PC-3 (cell line): ENCODE measurements at regions of chr6 and their contacts with region 1.

Region 1: DNA sequence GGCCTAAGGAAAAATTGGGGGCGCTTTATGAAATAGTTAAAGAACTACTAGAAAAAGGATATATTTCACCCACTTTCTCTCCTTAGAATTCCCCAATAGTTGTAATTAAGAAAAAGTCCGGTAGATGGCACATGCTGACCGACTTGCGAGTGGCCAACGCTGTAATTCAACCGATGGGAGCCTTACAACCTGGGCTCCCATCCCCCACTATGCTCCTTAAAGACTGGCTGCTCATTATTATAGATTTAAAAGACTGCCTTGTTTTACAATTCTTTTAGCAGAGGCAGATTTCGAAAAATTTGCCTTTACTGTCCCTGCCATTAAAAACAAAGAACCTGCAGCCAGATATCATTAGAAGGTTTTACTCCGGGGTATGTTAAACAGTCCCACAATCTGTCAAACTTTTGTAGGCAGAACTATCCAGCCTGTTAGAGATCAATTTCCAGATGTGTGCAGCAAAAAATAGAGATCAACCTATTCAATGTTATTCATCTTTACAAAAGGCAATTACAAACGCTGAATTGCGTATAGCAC is 58.5 kb upstream of the PRSS16 start:
- DNase-seq: peak; percentile 91
- ATAC-seq: peak; percentile 80
- H3K4me3 ChIP-seq: peak overlapping the region; percentile 81
- H3K27ac ChIP-seq: peak overlapping the region; percentile 41
- H3K4me1 ChIP-seq: no peaks in the 10 kb centered on the region
- H3K27me3 ChIP-seq: no peaks in the 10 kb centered on the region
- CTCF ChIP-seq: peak; percentile 81

Region 2: DNA sequence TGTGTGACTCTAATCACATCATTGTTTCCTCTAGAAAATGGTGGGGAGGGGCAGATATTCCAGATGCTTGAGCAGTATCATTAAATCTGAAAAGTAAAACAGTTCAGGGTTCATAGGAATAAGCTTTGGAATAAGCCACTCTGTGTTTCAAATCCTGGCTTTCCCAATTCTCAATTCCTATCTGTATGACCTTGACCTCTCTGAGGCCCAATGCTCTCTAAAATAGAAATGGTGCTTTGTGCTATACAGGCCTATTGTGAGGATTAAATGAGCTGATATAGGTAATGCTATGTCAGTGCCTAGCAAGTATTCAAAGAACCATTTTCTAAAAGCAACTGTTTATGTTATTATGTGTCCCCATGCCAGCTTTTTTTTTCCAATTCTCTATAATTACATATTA is 150.5 kb before region 1 on chr6:
- CTCF ChIA-PET with region 1: no interaction called
- POLR2A ChIA-PET with region 1: no interaction called
- intact Hi-C with region 1: no loop called
- DNase-seq: no peak
- ATAC-seq: no peak
- H3K4me3 ChIP-seq: no peak overlapping the region
- H3K27ac ChIP-seq: no peak overlapping the region
- H3K4me1 ChIP-seq: no peaks in the 10 kb centered on the region
- H3K27me3 ChIP-seq: no peaks in the 10 kb centered on the region; the same call in 1 of the 2 replicates
- CTCF ChIP-seq: no peak

Region 3: DNA sequence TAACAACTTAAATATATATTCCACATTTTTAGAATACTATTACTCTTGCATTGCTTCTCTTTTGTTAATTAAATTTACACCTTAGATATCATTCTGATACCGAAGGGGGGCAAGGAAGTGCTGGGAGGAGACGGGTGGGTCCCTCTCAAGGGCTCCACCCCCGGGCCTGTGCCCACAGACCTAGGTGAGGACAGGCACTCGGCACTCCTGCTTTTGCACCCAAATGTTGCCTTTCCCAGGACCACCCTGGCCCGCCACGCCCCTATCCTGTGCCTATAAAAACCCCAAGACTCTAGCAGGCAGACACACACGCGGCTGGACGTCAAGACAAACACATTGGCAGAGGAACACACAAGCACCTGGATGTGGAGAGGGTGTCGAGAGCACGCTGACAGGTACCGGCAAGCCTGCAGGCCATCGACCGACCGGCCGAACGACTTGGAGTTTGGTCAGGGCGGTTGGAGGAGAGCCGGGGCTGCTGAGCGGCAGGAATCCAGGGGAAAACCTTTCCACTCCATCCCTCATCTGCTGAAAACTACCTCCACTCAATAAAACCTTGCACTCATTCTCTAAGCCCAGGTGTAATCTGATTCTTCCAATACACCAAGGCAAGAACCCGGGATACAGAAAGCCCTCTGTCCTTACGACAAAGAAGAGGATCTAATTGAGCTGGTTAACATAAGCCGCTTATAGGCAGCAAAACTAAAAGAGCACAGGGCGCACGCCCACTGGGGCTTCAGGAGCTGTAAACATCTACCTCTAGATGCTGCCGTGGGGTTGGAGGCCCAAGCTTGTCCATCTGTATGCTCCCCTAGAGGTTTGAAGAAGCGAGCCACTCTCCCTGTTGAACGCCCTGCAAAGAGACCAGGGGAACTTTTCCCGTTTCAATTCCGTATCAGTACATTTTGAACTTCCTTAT is 138.8 kb before region 1 on chr6:
- CTCF ChIA-PET with region 1: no interaction called
- POLR2A ChIA-PET with region 1: no interaction called
- intact Hi-C with region 1: no loop called
- DNase-seq: no peak
- ATAC-seq: no peak
- H3K4me3 ChIP-seq: no peak overlapping the region
- H3K27ac ChIP-seq: no peak overlapping the region
- H3K4me1 ChIP-seq: no peaks in the 10 kb centered on the region
- H3K27me3 ChIP-seq: no peaks in the 10 kb centered on the region
- CTCF ChIP-seq: no peak

Region 4: GRCh38 chr6:27177485-27178406 is 11.2 kb before region 1 on chr6:
- CTCF ChIA-PET with region 1: no interaction called
- POLR2A ChIA-PET with region 1: no interaction called
- intact Hi-C with region 1: loop called (anchors 1 kb)
- DNase-seq: peak; percentile 88
- ATAC-seq: peak; percentile 81
- H3K4me3 ChIP-seq: peak overlapping the region; percentile 99
- H3K27ac ChIP-seq: peak overlapping the region; percentile 52
- H3K4me1 ChIP-seq: no peaks in the 10 kb centered on the region
- H3K27me3 ChIP-seq: no peaks in the 10 kb centered on the region
- CTCF ChIP-seq: peak; percentile 62

Region 5: GRCh38 chr6:27388293-27389197 is 199.6 kb after region 1 on chr6 and contains the start of gene ZNF391:
- CTCF ChIA-PET with region 1: no interaction called
- POLR2A ChIA-PET with region 1: no interaction called
- intact Hi-C with region 1: loop called (anchors 5 kb)
- DNase-seq: peak; percentile 79
- ATAC-seq: peak; percentile 94
- H3K4me3 ChIP-seq: peak within 1 kb of the TSS; percentile 86
- H3K27ac ChIP-seq: peak within 1 kb of the TSS; percentile 62
- H3K4me1 ChIP-seq: peaks cover 9% of the 10 kb centered on the region
- H3K27me3 ChIP-seq: no peaks in the 10 kb centered on the region
- CTCF ChIP-seq: no peak
- total RNA-seq, gene ZNF391: 1.7 and 5.9 TPM in 2 replicates

Region 6: GRCh38 chr6:27503436-27504030 is 314.6 kb after region 1 on chr6:
- CTCF ChIA-PET with region 1: no interaction called
- POLR2A ChIA-PET with region 1: no interaction called
- intact Hi-C with region 1: loop called (anchors 1 kb)
- DNase-seq: peak; percentile 91
- ATAC-seq: peak; percentile 25
- H3K4me3 ChIP-seq: peak overlapping the region; percentile 86
- H3K27ac ChIP-seq: peak overlapping the region; percentile 11; the same call in 1 of the 2 replicates
- H3K4me1 ChIP-seq: peaks cover 8% of the 10 kb centered on the region; the same call in 1 of the 2 replicates
- H3K27me3 ChIP-seq: no peaks in the 10 kb centered on the region
- CTCF ChIP-seq: no peak

Region 7: DNA sequence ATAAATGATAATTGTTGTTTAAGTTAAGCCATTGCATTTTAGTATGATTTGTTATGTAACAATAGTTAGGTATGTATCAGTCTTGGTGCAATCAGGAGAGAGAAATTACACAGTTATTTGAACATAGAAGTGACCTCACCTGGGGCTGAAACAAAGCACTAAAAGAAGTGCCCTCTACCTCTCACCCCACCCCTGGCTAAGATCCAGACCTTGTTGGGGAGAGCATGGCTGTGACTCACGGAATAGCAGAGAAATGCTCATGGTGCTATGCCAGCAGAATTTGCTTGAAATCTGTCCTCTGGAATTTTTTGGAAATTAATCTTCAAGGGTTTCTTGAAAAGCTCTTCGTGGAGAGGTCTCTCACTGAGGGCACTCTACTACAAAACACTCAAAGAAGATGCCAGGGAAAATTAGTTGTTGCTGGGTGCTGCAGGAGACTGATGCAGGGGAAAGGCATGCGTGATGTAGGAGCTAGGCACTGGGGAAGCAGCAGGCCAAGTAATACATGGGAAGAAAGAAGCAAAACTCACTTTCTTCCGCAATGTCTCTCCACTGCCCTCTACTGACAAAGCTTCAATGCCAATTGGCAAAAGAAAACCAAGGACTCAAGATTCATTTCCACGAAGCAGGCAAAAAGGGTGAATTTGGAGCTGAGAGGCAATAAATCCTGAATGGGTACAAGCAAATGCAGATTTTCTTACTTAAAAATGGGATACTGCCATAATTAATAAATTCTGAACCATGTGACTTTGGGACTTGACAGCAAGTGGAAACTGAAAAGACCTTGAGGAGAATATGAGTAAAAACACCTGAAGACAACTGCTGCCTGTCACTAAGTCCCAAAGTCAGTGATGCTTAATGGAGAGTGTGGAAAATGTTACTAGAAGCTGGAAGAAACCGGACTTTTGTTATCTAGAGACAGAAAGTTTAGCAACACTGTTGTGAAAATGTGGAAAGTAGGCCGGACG is 420.2 kb after region 1 on chr6:
- CTCF ChIA-PET with region 1: no interaction called
- POLR2A ChIA-PET with region 1: no interaction called
- intact Hi-C with region 1: loop called (anchors 1 kb)
- DNase-seq: peak; percentile 86
- ATAC-seq: peak; percentile 89
- H3K4me3 ChIP-seq: peak overlapping the region; percentile 39; the same call in 1 of the 2 replicates
- H3K27ac ChIP-seq: peak overlapping the region; percentile 49
- H3K4me1 ChIP-seq: peaks cover 7% of the 10 kb centered on the region
- H3K27me3 ChIP-seq: no peaks in the 10 kb centered on the region
- CTCF ChIP-seq: peak; percentile 90

Region 8: DNA sequence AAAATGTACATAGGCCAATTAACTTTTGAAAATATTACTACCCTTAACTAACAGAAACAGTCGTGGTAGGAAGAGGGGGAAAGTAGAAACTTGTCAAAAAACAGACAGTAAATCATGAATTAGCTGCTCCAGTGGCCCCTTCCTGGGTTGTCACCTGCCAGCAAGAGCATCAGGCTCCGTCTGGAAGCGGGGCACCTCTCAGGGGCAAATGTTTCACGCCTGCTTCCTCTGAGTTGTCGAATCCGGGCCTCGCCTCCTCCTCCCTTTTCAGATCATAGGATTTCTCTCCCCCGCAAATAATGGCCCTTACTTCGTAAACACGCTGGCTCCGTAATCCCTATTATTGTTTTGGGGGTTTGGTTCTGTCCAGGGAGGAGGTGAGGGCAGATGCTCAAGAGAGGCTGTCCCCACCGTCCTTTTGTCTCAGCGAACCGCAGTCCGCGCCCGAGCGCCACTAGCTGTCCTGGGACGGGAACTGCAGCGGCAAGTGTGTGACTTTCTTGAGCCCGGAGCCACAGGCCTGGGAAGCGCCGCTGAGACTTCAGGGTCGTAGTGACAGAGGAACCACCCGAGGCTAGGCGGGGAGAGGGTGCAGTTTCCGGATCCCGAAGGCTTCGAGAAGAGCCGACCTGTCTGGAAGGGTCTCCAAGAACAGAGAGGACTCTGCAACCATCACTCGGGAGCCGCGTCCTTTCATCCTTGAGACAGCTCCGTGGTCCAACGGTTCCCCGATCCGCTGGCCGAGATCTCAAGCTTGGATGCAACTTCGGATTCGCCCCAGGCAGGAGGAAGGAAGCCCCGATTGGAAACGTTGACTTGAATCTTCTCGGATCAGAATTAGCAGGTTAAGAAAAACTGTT is 498.4 kb after region 1 on chr6:
- CTCF ChIA-PET with region 1: no interaction called
- POLR2A ChIA-PET with region 1: no interaction called
- intact Hi-C with region 1: loop called (anchors 1 kb)
- DNase-seq: peak; percentile 86
- ATAC-seq: peak; percentile 78
- H3K4me3 ChIP-seq: peak overlapping the region; percentile 83
- H3K27ac ChIP-seq: 0 out of 2 replicates have a peak overlapping the region, but pooled peaks have one; percentile 7
- H3K4me1 ChIP-seq: no peaks in the 10 kb centered on the region
- H3K27me3 ChIP-seq: no peaks in the 10 kb centered on the region
- CTCF ChIP-seq: peak; percentile 90

Region 9: DNA sequence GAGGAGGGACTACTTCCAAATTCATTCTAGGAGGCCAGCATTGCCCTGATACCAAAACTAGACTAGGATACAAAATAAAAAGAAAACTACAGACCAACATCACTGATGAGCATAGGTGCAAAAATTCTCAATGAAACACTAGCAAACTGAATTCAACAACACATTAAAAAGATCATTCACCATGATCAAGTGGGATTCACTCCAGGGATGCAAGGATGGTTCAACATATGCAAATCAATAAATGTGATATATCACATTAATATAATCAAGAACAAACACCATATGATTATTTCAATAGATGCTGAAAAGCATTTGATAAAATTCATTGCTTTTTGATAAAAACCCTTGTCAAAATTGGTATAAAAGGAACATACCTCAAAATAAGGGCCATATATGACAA is 1102.6 kb after region 1 on chr6:
- CTCF ChIA-PET with region 1: no interaction called
- POLR2A ChIA-PET with region 1: no interaction called
- intact Hi-C with region 1: no loop called
- DNase-seq: no peak
- ATAC-seq: no peak
- H3K4me3 ChIP-seq: no peak overlapping the region
- H3K27ac ChIP-seq: no peak overlapping the region
- H3K4me1 ChIP-seq: no peaks in the 10 kb centered on the region
- H3K27me3 ChIP-seq: no peaks in the 10 kb centered on the region
- CTCF ChIP-seq: no peak